ENCODE measurements at regions of chr4 and their contacts with region 1.

Region 1: DNA sequence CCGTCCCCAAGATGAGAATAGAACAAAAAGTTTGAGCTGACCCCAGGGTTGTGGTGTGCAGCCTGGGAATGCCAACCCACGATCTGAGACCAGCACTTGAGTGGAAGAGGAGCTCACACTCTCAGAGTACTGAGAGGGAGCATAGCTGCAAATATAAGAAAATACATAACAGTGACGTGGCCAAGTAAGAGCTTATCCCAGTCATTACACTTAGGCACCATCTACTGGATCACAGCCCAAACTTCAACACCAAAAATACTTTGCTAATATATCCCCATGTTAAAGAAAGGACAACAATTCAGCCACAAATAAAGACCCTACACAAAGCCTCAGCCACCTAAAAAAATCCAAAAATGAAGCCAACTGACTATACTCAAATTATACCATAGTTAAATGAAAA is 33.3 kb upstream of the CXCL6 start:
- DNase-seq: no peak
- ATAC-seq: no peak
- H3K4me3 ChIP-seq: no peak overlapping the region
- H3K27ac ChIP-seq: no peak overlapping the region
- H3K4me1 ChIP-seq: no peaks in the 10 kb centered on the region
- H3K27me3 ChIP-seq: no peaks in the 10 kb centered on the region
- CTCF ChIP-seq: no peak

Region 2: DNA sequence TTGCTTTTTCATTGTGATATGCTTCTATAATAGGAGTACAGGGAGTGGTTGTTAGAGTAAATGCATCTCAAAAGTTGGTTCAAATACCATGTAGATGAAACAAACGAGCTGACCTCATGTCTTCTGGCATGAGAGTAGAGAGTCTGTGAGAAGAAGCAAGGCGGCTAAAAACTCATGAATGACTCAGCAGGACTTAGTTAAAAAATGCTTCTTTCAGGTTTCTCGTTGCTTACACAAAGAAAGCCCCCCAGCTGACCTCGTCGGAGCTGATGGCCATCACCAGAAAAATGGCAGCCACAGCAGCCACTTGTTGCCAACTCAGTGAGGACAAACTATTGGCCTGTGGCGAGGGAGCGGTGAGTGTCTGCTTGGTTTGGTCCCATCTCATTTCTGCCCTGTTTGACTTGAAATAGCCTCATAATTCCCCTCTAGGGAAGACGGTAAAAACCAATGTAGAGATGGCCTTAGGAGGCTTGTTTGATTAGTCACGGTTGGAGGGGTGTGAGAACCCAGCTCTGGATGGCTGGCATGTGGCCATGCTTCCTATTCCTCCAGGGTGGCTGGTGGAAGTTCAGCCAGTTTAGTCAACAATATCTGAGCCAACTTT is 352.7 kb before region 1 on chr4:
- intact Hi-C with region 1: loop called in 1 of 10 experiments (anchors 10 kb)
- DNase-seq: peak in 1 of 2 donors; percentile 29
- ATAC-seq: peak in 2 of 8 donors; percentile 42 to 83
- H3K4me3 ChIP-seq: no peak overlapping the region
- H3K27ac ChIP-seq: peak overlapping the region in 2 of 10 donors; percentile 24 to 36
- H3K4me1 ChIP-seq: no peaks in the 10 kb centered on the region
- H3K27me3 ChIP-seq: peaks cover 0 to 15% (median 3%) of the 10 kb centered on the region in 7 donors
- CTCF ChIP-seq: no peak

Region 3: DNA sequence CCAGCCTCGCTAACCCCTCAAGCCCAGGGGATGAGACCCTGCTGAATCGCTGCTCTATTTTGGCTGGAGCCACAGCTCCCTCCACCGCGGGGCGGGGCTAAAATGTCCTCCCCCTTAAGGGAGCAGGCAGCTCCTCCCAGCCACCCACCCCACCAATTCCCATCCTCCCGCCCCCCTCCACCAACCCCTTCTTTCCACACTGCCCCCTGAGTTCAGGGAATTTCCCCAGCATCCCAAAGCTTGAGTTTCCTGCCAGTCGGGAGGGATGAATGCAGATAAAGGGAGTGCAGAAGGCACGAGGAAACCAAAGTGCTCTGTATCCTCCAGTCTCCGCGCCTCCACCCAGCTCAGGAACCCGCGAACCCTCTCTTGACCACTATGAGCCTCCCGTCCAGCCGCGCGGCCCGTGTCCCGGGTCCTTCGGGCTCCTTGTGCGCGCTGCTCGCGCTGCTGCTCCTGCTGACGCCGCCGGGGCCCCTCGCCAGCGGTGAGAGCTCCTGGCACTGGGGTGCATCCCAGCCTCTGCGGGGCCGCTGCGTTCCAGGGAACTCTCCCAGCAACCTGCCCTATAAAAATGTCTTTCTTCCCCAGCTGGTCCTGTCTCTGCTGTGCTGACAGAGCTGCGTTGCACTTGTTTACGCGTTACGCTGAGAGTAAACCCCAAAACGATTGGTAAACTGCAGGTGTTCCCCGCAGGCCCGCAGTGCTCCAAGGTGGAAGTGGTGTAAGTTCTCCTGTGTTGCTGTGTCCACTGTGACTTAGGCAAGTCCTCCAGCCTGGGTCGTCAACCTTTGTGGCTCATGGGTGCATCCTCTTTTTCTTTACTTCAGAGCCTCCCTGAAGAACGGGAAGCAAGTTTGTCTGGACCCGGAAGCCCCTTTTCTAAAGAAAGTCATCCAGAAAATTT is 33.4 kb after region 1 on chr4 and contains the start of gene CXCL6:
- intact Hi-C with region 1: loop called in 1 of 10 experiments (anchors 1 kb)
- DNase-seq: peak in 1 of 2 donors; percentile 41
- ATAC-seq: peak in 5 of 8 donors; percentile 31 to 60 (median 49)
- H3K4me3 ChIP-seq: peak within 1 kb of the TSS in 9 of 10 donors; percentile 4 to 52 (median 35)
- H3K27ac ChIP-seq: peak within 1 kb of the TSS in 1 of 10 donors; percentile 61
- H3K4me1 ChIP-seq: peaks cover 0 to 21% (median 5%) of the 10 kb centered on the region in 9 donors
- H3K27me3 ChIP-seq: peaks cover 0 to 51% (median 6%) of the 10 kb centered on the region in 7 donors
- CTCF ChIP-seq: no peak
- total RNA-seq, gene CXCL6: 0.28 to 3.7 TPM in 2 of 10 donors, not detected in the others

Measured in heart right ventricle (tissue), 16 donors.